Posterior cingulate gyrus (tissue), 11 donors: ENCODE measurements at regions of chr2 and their contacts with region 1.

Region 1: DNA sequence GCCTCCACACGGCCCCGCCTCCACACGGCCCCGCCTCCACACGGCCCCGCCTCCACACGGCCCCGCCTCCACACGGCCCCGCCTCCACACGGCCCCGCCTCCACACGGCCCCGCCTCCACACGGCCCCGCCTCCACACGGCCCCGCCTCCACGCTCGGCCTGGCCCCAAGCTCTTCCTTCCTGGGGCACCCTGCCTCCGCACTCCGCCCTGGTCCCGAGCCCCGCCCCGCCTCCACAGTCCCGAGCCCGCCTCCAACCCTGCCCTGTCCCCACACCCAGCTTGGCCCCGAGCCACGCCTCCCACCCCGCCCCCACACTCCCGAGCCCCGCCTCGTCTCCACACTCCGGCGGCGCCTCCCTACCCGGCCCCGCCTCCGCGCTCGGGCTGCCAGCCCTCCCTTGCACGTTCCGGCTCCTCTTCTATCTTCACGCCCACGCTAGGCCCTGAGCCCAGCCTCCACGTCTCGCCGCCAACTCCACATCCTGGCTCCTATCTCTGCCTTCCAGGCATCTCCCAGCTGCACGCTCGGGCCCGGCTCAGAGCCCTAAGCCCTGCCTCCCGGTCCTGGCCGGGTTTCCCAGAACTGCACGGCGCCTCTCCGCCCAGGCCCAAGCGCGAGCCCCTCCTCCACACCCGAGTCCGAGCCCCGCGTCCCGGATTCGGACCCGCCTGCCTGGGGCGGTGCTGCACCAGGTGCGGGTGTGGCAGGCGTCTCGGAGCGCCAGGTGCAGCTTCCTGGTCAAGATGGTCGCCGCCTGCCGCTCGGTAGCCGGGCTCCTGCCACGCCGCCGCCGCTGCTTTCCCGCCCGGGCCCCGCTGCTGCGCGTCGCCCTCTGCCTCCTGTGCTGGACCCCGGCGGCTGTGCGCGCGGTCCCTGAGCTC is at the start of gene TMEM87B:
- DNase-seq: peak; percentile 90 to 99 (median 95)

Region 2: DNA sequence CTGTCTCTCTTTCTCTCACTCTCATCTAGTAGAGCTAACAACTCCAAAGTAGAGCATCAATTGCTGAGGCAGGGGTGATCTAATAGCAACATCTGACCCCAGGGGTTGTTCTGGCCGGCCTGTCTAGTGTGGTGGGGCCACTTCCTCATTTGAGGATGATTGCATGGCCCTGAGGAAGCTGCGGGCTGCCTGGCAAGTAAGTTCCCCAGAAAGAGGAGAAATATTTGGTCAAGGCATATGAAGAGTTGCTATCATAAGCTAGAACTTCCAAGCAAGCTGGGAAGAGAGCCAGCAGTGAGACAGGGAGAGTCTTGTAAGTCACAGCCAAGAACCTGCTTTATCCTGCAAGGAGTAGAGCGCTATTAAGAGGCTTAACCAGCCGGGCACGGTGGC is 50.8 kb before region 1 on chr2:
- intact Hi-C with region 1: no loop called
- DNase-seq: peak in 6 of 10 donors; percentile 7 to 70 (median 25)

Region 3: DNA sequence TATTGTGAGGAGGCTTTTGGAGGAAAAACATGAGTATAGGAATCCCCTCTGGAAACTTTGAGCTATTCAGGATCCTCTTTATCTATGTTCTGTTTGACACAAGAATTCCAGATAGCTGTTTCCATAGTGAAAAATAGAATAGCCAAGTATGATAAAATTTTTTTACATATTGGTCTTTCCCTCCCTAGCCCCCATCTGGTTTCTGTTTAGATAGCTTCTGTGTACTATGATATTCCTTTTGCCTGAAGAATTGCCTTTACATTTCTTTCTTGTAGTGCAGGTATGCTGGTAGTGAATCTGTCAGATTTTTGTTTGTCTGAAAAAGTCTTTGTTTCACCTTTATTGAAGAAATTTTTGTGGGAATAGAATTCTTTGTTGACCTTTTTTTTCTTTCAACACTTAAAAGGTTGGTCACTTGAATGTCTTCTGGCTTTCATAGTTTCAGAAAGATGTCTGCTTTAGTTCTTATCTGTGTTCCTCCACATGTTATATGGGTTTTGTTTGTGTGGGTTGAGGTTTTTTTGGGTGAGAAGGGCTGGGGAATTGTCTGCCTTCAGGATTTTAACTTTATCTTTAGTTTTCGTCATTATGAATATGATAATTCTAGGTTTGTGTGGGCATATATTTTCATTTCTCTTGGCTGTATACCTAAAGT is 53.2 kb after region 1 on chr2:
- intact Hi-C with region 1: no loop called
- DNase-seq: no peak

Region 4: DNA sequence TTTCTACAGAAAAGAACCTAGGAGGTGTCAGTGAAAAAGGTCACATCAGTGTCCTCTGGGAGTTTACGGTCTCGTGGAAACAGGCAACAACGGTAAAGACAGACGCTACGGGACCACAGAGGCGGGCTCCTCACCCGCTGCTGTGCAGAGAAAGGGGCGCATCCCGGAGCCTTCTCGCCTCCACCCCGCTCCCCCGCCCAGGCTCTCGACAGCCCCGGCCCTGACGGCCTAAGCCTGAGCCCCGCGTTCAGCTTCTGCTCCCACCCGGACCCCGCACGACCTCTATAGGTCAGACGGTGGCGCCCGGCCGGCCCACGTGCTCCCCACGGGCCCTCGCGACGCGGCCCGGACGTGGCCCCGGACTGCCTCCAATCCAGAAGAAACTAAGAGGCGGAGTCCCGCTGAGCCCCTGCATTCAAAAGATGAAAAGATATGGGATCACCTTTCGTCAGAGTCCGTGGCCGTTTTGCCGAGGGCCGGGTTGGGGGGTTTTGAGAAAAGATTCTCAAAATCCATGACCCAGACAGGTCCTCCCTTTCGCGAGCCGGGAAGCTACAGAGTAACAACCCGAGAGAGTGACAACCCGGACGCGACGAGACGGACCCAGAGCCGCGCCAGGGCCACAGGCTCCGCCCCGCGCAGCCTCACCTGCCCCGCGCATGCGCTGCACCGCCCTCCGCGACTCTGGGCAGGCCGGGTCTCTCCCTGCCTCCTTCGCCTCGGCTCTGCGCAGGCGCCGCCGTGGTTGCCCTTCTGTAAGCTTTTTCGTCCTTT is 199.6 kb after region 1 on chr2 and contains the start of gene ZC3H8:
- intact Hi-C with region 1: loop called (anchors 5 kb)
- DNase-seq: peak; percentile 89 to 99 (median 93)

Region 5: GRCh38 chr2:112481050-112481527 is 426.0 kb after region 1 on chr2:
- intact Hi-C with region 1: loop called (anchors 5 kb)
- DNase-seq: peak; percentile 82 to 98 (median 88)

Region 6: DNA sequence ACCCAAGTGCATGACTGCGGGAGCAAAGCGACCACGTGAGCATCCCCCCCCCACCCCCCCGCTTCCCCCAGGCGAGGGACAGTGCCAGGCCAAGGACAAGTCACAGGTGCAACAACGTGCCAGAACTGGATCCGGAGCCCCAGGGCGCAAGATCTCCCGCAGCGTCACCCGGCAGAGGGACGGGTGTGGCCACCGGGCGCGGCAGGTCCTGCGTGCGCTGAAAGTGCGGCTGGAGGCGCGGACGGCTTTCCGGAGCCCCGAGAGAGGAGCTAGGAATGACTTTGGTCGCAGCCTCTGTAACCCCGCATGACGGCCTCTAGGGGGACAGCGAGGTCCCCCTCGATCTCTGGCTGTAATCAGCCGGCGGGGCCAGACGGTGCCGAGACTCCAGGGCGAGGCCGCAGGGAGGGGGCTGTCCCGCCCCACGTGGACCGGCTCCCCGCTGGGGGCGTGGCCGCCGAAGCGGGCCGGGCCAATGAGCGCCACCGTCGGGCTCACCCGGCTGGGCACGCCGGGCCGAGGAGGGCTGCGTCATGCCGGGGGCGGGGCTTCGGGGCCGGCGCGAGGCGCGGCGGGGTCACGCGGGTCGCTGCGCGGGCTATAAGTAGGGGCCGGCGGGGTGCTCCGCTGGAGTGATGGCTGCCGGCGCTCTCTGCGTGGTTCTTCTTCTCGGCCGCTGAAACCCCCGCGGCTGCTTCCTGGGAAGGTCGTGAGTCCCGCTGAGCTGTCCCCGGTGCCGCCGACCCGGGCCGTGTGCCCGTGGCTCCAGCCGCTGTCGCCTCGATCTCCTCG is 590.4 kb after region 1 on chr2 and contains the start of gene SLC20A1:
- intact Hi-C with region 1: loop called (anchors 10 kb)
- DNase-seq: peak; percentile 96 to 100 (median 98)